GM10248 (cell line): ENCODE measurements at regions of chr19 and their contacts with region 1.

Region 1: GRCh38 chr19:2475702-2476450 is at the start of gene GADD45B:
- DNase-seq: peak; percentile 98
- CTCF ChIP-seq: no peak

Region 2: DNA sequence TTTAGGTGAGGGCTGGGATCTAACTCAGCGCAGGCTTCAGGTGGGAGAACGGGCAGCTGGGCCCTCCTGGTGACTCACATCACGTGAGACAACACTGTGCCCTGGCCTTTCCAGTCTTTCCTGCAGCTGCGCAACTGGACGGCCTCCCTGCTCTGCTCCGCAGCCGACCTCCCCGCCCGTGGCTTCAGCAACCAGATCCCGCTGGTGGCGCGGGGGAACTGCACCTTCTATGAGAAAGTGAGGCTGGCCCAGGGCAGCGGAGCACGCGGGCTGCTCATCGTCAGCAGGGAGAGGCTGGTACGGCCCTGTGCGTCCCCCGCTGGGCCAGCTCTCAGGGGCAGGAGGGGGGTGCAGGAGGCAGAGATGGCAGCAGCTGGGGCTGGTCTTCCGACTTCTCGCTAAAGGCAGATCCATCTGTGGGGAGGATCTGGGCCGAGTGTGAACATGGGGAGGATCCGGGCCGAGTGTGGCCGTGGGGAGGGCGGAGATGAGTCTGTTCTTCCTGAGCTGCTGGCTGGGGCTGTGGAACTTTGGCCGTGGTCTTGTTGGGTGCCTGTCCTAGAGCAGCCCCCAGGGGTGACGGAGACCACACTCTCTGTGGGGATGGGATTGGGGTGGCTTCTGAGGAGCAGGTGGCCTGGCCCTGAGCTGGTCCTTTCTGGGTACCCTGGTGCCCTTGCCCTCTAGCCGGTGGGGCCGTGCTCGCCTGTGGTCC is 138.4 kb before region 1 on chr19:
- CTCF ChIA-PET with region 1: no interaction called
- POLR2A ChIA-PET with region 1: no interaction called
- DNase-seq: no peak
- CTCF ChIP-seq: no peak

Region 3: GRCh38 chr19:2359992-2360685 is 115.7 kb before region 1 on chr19 and contains the start of gene TMPRSS9:
- CTCF ChIA-PET with region 1: no interaction called
- POLR2A ChIA-PET with region 1: no interaction called
- DNase-seq: no peak
- CTCF ChIP-seq: no peak

Region 4: GRCh38 chr19:2415281-2415972 is 60.4 kb before region 1 on chr19:
- CTCF ChIA-PET with region 1: no interaction called
- POLR2A ChIA-PET with region 1: no interaction called
- DNase-seq: no peak
- CTCF ChIP-seq: no peak

Region 5: DNA sequence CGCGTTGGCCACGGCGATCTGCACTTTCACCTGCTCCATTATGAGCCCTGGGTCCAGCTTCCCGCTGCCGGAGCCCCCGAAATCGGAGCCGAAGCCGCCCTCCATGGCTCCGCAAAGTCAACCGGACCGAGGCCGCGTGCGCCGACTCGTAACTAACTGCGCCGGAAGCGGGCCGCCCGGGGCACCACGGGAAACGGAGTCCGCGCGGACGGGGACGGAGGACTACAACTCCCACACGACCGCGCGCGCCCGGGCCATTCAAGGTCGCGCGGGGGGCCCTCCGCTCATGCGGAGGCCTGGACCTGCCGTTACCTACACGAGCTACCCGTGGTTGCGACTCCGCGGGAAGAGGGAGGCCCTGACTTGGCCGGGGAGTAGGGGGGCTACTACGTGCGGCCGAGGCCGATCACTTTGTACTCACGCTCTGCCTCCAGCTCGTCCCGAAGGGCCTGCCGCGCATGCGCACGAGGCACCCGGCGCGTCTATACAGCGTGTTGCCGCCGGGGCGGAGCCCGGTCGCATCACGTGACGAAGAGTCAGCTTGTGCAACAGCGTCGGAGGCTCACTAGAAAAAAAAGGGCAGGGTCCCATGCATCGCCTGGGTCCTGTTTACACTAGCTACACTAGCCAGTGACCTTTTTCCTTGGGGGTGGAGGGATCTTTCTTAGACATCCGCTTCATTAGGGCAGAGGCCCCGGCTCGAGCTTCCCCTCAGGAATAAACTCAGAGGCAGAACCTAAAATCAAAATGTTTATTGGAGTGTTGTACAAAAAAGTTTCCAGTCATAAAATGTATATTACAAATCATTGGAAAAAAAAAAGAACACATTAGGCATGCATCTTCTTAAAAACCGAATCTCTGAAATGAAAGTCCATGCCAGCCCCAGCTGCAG is 48.2 kb before region 1 on chr19 and contains the start of gene TIMM13:
- CTCF ChIA-PET with region 1: no interaction called
- POLR2A ChIA-PET with region 1: interaction called, 12 read pairs
- DNase-seq: peak; percentile 97
- CTCF ChIP-seq: no peak

Region 6: DNA sequence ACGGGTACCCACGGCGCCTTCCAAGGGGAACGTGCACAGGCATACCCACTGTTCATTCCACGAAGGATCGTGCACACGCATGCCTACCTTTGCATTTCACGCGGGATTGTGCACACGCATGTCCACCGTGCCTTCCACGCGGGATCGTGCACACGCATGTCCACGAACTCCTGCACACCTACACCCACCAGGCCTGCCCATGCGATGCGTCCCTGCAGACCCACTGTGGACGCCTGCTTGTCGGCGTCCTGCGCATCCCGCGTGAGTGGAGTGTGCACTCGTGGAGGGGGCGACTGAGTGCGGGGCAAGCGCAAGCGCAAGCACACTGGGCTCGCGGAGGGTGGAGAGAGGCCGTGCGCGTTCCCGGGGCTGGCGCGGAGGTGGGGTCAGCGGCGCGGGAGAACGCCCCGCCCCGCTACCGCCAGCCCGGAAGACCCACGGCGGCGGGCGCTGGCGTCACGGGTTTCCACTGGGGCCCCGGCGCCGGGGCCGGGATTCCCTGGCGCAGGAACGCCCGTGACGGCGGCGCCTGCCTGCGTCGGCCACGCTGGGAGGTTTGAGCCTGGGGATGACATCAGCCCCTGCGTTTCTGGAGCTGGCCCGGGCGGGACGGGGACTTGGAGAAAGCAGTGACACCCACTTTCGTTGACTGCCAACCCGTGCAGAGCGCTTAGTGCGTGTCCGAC is 18.7 kb after region 1 on chr19:
- CTCF ChIA-PET with region 1: interaction called, 8 read pairs
- POLR2A ChIA-PET with region 1: interaction called, 35 read pairs
- DNase-seq: peak; percentile 82
- CTCF ChIP-seq: no peak

Region 7: GRCh38 chr19:2578901-2579677 is 103.2 kb after region 1 on chr19:
- CTCF ChIA-PET with region 1: interaction called, 10 read pairs
- POLR2A ChIA-PET with region 1: interaction called, 23 read pairs
- DNase-seq: peak; percentile 83
- CTCF ChIP-seq: peak; percentile 74

Region 8: GRCh38 chr19:2610637-2611482 is 135.0 kb after region 1 on chr19:
- CTCF ChIA-PET with region 1: interaction called, 126 read pairs
- POLR2A ChIA-PET with region 1: interaction called, 275 read pairs
- DNase-seq: peak; percentile 72
- CTCF ChIP-seq: peak; percentile 99

Region 9: DNA sequence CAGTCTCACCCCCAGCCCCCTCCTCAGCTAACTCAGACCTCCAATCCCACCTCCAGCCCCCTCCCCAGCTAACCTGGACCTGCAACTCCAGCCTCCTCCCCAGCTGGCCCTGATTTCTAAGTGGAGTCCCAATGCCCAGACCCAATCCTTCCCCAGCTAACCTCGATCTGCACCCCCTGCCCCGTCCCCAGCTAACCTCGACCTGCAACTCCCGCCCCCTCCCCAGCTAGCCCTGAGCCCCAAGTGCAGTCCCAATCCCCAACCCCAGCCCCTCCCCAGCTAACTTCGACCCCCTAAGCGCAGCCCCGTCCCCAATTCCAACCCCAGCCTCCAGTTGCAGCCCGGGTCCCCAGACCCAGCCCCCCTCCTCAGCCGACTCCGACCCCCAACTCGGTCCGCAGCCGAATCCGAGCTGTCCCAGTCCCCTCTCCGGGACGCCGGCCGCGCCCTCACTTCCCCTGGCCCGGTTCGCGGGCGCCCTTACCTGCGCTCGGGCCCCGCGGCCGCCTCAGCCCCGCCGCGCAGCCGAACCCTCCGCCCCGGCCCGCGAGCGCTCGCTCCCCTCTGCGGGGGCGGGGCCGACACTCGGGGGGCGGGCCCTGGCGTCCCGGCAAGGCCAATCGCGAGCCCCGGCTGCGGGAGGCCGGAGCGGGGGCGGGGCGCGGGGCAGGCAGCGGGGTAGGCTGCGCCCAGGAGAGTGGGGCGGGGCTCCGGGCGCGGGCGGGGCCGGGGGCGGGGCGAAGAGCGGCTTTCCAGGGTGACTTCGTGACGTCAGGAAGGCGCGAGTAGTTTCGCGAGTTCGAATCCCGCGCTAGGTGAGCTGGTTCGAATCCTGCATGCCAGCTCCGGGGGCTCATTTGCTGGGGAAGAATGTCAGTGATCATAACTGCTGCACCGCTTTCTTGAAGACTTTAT is 226.5 kb after region 1 on chr19 and contains the start of gene GNG7:
- CTCF ChIA-PET with region 1: no interaction called
- POLR2A ChIA-PET with region 1: interaction called, 11 read pairs
- DNase-seq: peak; percentile 100
- CTCF ChIP-seq: no peak